OCI-LY7 (cell line): ENCODE measurements at regions of chr1 and their contacts with region 1.

Region 1: GRCh38 chr1:226827968-226828513 is 42.4 kb upstream of the PSEN2 start:
- DNase-seq: peak; percentile 97
- H3K4me3 ChIP-seq: peak overlapping the region; percentile 42
- H3K27ac ChIP-seq: peak overlapping the region; percentile 58
- H3K4me1 ChIP-seq: peaks cover 43% of the 10 kb centered on the region
- CTCF ChIP-seq: peak; percentile 95

Region 2: DNA sequence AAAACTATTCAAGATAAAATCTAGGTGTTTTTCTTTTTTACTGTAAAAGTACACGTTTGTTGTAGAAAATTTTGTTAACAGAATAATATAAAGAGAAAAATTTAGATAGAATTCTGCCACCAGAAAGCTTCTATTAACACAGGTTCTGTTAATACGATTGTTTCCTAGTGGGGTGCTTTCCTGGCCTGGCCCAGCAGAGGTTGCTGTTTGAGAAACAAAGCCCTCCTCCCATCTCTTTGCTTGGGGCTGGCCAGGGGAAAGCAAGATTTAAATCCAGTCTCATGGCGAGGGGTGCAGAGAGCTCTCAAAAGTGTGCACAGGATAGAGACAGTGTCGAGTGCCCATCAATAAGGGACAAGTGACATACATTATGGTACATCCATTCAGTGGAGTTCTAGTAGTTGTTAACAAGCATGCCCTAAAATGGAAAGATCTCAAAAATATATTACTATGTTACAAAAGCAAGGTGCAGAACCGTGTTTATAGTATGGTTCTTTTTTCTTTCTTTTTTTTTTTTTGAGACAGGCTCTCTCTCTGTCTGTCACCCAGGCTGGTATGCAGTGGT is 626.9 kb before region 1 on chr1:
- CTCF ChIA-PET with region 1: no interaction called
- POLR2A ChIA-PET with region 1: no interaction called
- intact Hi-C with region 1: no loop called
- DNase-seq: peak; percentile 79
- H3K4me3 ChIP-seq: no peak overlapping the region
- H3K27ac ChIP-seq: peak overlapping the region; percentile 24
- H3K4me1 ChIP-seq: peaks cover 48% of the 10 kb centered on the region
- CTCF ChIP-seq: peak; percentile 91

Region 3: DNA sequence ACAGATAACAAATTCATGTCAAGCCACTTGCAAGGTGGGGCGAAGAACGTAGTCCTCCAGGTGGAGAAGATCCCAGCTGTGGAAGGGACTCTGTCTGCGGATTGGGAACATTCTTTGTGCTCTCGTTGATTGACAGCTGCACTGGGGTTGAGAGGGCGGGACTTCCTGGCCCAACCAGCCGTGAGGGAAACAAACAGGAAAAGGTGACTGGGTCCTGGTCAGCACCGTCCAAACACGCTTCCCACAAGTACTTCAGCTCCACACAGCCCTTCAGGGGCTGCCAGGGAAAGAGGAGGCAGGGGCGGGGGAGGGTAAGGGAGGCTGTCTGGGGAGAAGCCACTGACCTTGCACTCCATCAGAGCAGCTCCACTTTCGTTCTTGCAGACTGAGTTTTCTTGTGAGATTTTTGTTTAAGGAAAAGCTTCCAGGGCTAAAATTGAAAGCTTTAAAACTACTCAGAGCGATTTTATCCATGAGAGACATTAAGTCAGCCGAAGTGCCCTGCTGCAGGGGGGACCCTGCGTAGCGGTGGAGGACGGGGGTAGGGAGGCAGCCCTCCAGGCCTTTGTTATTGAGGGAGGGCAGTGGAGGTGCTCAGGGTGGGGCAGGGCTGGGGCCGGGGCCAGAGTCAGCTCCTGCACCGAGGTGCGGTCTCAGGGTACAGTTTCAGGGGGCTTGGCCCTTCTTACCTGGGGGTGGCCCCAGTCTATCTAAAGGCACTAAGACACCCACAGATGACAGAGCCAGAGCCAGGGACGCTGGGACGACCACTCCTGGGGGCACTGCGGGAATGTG is 301.0 kb before region 1 on chr1:
- CTCF ChIA-PET with region 1: no interaction called
- POLR2A ChIA-PET with region 1: no interaction called
- intact Hi-C with region 1: no loop called
- DNase-seq: peak; percentile 67
- H3K4me3 ChIP-seq: peak overlapping the region; percentile 21
- H3K27ac ChIP-seq: no peak overlapping the region
- H3K4me1 ChIP-seq: peaks cover 10% of the 10 kb centered on the region
- CTCF ChIP-seq: no peak

Region 4: DNA sequence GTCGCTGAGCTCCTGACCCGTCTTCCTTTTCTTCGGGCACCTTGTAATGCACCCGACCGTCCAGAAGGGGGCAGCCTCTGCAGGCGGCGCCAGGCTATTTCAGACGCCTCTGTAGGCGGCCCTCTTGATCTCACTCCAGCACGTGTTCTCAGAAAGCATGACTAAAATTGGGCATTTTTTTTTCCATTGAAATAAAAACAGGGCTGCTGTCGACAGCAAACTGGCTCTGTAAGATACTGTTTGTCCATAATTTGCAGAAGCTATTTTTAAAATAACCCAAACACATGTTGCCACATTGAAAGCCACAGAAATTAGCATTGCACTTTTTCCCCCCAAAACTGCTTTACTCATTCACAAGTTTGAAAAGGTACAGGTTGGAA is 201.5 kb before region 1 on chr1:
- CTCF ChIA-PET with region 1: interaction called, 3 read pairs
- POLR2A ChIA-PET with region 1: interaction called, 5 read pairs
- intact Hi-C with region 1: loop called (anchors 2 kb)
- DNase-seq: peak; percentile 77
- H3K4me3 ChIP-seq: no peak overlapping the region
- H3K27ac ChIP-seq: no peak overlapping the region
- H3K4me1 ChIP-seq: peaks cover 3% of the 10 kb centered on the region
- CTCF ChIP-seq: peak; percentile 99

Region 5: GRCh38 chr1:226643611-226644540 is 184.2 kb before region 1 on chr1:
- CTCF ChIA-PET with region 1: no interaction called
- POLR2A ChIA-PET with region 1: interaction called, 4 read pairs
- intact Hi-C with region 1: loop called (anchors 1 kb)
- DNase-seq: peak; percentile 72
- H3K4me3 ChIP-seq: peak overlapping the region; percentile 7
- H3K27ac ChIP-seq: peak overlapping the region; percentile 62
- H3K4me1 ChIP-seq: peaks cover 39% of the 10 kb centered on the region
- CTCF ChIP-seq: peak; percentile 62

Region 6: DNA sequence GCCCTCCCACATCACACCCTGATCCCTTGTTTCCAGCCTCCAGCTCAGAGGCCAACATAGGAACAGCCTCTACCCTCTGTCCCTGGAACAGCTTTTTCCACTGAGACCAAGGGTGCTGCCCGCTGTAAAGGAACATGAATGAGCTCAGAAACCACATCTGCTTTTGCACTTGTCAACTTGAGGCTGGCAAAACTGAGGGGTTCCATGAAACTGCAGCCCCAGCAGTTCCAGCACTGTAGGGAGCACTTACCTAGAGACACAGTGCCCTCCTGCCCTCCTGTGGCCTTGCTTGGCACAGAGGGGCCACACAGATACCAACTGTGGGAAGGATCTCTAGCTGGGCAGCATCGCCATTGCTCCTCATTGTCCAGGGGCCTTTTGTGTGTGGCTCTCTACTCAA is 140.6 kb before region 1 on chr1:
- CTCF ChIA-PET with region 1: no interaction called
- POLR2A ChIA-PET with region 1: interaction called, 8 read pairs
- intact Hi-C with region 1: loop called (anchors 5 kb)
- DNase-seq: peak; percentile 66
- H3K4me3 ChIP-seq: peak overlapping the region; percentile 27
- H3K27ac ChIP-seq: peak overlapping the region; percentile 73
- H3K4me1 ChIP-seq: peaks cover 99% of the 10 kb centered on the region
- CTCF ChIP-seq: peak; percentile 71

Region 7: GRCh38 chr1:226763905-226764264 is 64.2 kb before region 1 on chr1:
- CTCF ChIA-PET with region 1: no interaction called
- POLR2A ChIA-PET with region 1: interaction called, 3 read pairs
- intact Hi-C with region 1: loop called (anchors 5 kb)
- DNase-seq: peak; percentile 57
- H3K4me3 ChIP-seq: peak overlapping the region; percentile 50
- H3K27ac ChIP-seq: peak overlapping the region; percentile 98
- H3K4me1 ChIP-seq: peaks cover 55% of the 10 kb centered on the region
- CTCF ChIP-seq: no peak

Region 8: DNA sequence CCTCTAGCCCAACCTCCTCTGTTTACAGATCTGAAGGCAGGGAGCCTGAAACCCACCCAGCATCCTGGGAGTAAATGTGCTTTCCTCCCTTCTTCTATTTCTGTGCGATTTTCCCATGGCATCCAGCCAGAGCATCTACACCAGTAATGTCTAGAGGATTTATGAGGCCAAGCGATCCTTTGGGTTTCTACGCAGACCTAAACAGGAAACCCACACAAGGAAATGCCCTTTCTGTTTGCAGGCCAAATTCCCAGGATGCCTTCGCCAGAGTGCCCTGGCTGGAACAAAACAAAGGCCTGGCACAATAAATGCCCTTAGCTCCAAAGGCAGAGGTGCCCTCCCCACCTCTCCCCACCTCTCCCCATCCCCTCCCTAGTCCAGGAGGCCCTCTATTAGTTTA is 600.8 kb after region 1 on chr1:
- CTCF ChIA-PET with region 1: no interaction called
- POLR2A ChIA-PET with region 1: no interaction called
- intact Hi-C with region 1: no loop called
- DNase-seq: no peak
- H3K4me3 ChIP-seq: no peak overlapping the region
- H3K27ac ChIP-seq: no peak overlapping the region
- H3K4me1 ChIP-seq: no peaks in the 10 kb centered on the region
- CTCF ChIP-seq: no peak